ENCODE measurements at regions of chr16 and their contacts with region 1.

Region 1: DNA sequence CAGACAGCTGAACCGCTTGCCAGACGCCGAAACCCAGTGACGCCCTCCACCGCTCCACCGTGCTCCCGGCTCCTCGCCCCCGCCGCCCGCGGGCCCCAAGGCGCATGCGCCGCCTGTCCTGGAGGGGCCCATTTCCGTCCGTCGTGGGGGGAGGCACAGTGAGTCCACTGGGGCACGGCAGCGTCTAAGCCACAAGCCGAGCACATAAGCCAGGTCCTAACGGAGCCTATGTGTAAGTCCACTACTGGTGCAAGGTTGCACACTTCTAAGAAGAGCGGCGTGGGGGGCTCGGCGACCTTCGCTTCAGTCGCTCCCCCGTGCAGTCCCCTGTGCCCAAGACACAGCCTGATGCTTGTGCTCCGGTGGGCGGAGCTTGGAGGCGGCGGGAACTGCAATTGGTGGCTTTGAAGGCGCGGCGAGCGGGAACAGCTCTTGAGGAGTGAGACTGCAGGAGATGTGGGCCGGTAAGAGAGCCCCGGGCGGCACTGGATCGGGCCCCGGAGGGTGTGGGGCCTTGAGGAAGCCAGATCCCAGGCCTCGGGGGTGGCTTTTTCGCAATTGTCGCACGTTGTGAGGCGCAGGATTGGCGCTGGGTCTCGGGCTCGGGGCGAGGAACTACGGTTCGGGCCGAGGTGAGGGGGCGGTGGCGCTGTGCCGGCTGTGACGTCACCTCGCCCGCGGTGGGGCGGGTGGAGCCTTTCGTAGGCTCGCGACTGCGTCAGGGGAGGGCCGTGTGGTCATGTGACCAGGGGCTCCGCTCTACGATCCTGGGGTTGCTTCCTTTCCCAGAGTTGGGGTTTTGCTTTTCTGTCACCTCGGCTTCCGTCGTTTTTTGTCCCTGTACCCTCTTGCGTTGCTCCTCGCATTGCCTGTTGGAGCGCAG is at the starts of genes CENPN and CMC2:
- DNase-seq: peak; percentile 91
- ATAC-seq: peak; percentile 96
- H3K4me3 ChIP-seq: peak within 1 kb of the TSS; percentile 84 to 88
- H3K27ac ChIP-seq: peak within 1 kb of the TSS; percentile 88
- H3K4me1 ChIP-seq: peaks cover 8% of the 10 kb centered on the region
- H3K27me3 ChIP-seq: no peaks in the 10 kb centered on the region
- CTCF ChIP-seq: no peak
- total RNA-seq, gene CENPN: 56.6 TPM
- total RNA-seq, gene CMC2: 82.0 TPM

Region 2: DNA sequence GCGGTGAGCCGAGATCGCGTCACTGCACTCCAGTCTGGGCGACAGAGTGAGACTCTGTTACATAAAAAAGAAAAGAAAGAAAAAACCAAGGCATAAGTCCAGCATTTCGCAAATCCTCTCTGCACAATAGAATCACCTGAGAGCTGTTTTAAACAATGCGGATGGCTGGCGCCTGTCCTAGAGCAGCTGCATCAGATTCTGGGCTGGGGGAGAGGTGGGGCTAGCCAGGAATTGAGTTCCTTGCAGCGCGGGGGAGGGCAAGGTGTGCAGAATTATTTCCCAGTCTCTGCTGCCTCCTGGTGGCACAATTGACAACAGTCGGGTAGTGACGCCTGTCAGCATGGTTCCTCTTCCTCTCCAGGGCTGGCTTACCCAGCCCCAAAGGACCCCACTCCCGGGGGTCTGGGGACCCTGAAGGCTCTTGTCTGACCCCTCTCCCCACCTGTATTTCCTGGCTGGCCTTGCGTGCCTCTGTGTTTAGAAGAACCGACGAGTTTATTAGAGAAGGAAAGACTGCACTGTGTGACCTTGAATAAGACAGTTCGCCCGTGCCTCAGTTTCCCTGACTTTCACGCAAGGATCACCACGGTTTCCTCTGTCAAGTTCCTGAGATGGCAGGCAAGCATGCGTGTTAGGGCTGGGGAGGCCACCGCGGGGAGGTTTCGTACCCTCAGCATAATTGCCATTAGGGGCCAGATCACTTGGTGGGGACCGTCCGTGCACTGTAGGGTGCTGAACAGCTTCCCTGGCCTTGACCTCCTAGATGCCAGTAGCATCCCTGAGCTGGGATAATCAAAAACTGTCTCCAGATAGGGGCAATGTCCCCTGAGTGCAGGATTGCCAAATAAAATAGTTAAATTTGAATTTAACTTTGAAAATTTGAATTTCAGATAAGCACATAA is 731.1 kb after region 1 on chr16:
- CTCF ChIA-PET with region 1: no interaction called
- POLR2A ChIA-PET with region 1: no interaction called
- in situ Hi-C with region 1: no loop called
- intact Hi-C with region 1: loop called (anchors 10 kb)
- DNase-seq: peak; percentile 61
- ATAC-seq: peak; percentile 94
- H3K4me3 ChIP-seq: peak overlapping the region; percentile 27 to 51
- H3K27ac ChIP-seq: no peak overlapping the region
- H3K4me1 ChIP-seq: no peaks in the 10 kb centered on the region
- H3K27me3 ChIP-seq: no peaks in the 10 kb centered on the region
- CTCF ChIP-seq: peak; percentile 84